Activated T-helper 2 cell treated with anti-CD3 and anti-CD28 coated beads, Interferon-gamma antibody, Interleukin-2, Interleukin-4, amounts not matched to agents 10 μg/mL and 5 μg/mL and 100 μg/mL, durations not matched to agents 14 hours and 24 hours and 36 hours (primary cell): ENCODE measurements at regions of chr11 and their contacts with region 1.

Region 1: GRCh38 chr11:44556735-44557409 is 8.6 kb upstream of the CD82 start:
- DNase-seq: peak; percentile 43
- H3K4me3 Mint-ChIP-seq: no peak overlapping the region
- H3K27ac Mint-ChIP-seq: peak overlapping the region; percentile 53
- H3K4me1 Mint-ChIP-seq: peaks cover 31% of the 10 kb centered on the region
- H3K27me3 Mint-ChIP-seq: peaks cover 2% of the 10 kb centered on the region

Region 2: DNA sequence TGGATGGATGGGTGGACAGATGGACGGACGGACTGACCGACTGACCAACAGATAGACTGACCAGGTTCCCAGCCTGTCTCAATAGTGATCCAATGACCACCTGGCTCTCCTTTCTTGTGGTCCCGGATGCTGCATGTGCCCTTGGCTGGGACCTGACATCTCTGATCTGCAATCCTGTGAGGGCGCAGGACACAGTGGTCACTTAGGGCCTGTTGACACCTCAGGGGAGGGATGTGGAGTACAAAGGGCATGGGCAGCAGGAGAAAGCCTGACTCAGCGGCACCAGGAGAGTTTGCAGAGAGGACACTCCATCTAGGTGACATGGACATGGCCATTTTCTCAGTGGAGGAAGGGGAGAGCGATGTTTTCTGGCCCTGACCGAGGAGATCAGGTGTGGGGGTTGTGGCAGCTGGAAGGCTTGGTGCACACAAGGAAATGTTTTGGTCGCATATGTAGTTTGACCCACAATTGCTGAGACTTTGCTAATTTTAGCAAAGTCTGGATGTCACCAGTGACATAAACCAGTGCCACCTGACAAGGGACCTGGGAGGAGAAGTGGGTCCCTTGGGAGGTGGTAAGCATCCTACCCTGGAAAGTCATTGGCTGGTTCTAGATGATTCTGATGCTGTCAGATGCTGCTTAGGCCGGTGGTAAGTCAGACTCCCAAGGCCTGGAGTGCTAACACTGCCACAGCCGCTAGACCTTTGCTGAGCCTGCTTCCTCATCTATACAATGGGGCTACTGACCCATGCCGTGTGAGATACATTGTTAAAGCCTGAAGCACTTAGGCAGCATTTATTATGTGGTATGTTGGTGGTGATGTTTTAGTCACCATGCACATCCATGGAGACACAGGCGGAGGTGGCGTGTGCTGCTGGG is 59.3 kb after region 1 on chr11:
- intact Hi-C with region 1: loop called (anchors 1 kb)
- DNase-seq: no peak
- H3K4me3 Mint-ChIP-seq: no peak overlapping the region
- H3K27ac Mint-ChIP-seq: peak overlapping the region; percentile 40
- H3K4me1 Mint-ChIP-seq: peaks cover 31% of the 10 kb centered on the region
- H3K27me3 Mint-ChIP-seq: no peaks in the 10 kb centered on the region

Region 3: DNA sequence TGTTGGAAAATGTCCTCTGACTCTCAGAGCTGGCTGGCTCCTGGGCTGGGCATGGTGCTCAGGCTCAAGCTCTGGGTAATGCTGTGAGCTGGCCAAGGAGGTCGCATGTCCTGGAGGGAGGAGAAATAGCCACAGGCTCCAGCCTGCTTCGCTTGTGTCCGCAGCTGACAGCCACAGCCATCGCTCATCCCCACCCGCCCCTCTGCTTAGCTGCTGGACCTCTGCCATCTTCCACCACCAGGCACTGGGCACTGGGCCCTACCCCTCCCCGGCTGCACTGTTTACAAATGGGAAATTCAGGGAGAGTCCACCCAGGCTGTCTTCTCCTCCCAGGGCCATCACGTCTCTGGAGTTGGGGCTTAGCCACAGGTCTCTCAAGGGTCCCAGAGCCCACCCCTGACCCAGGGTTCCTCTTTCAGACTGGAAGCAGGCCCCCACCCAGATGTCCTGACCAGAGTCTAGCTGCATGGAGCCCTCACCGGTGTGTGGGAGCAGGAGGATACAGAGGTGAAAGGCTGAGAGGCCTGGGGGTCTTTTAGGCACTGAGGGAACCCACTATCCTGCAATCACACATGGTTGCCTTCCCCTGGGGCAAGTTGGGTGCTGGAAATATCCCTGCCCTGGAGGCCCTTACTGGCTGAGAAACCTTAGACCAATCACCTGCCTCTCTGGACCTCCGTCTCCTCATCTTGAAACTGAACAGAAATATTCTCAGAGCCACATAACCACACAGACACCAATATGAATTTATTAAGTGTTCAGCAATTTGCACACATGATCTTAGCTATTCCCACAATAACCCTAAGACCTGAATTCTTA is 71.2 kb after region 1 on chr11:
- intact Hi-C with region 1: loop called (anchors 1 kb)
- DNase-seq: peak; percentile 6
- H3K4me3 Mint-ChIP-seq: no peak overlapping the region
- H3K27ac Mint-ChIP-seq: no peak overlapping the region
- H3K4me1 Mint-ChIP-seq: peaks cover 12% of the 10 kb centered on the region
- H3K27me3 Mint-ChIP-seq: no peaks in the 10 kb centered on the region

Region 4: DNA sequence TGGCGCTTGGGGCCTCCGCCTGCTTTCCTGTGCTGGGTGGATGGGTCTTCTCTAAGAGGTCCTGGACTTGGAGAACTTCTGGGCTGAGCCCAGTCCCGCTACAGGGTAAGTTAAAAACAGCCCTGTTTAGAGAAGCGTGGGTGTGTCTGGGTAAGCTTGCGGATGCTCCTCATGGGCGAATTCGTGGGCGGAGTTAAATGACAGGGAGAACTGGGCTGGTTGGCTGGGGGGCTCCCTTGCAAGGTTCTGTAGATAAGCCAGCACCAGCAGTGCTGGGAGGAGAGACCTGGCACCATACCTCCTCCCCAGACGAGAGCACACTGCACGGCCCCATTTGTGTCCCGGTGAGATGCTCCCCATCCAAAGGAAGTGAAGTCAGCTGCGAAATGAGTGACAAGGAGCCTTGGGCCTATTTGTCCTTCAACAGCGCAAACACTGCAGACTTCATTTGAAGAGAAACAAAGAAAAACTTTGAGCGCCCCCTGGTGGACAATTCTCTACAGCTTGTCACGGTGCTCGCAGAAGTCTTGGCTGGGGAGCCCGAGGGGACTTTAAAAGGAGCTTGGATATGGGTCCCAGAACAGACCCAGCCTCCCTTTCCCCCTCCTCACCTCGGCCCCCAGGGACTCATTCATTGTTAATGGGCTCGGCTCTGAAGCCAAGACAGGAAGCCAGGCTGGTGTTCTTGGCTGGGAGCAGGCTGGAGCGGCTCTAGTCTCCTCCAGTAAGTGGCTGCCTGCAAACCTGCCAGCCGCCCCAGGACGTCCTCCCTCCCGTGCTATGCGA is 354.4 kb after region 1 on chr11:
- intact Hi-C with region 1: loop called (anchors 5 kb)
- DNase-seq: peak; percentile 70
- H3K4me3 Mint-ChIP-seq: no peak overlapping the region
- H3K27ac Mint-ChIP-seq: no peak overlapping the region
- H3K4me1 Mint-ChIP-seq: peaks cover 3% of the 10 kb centered on the region
- H3K27me3 Mint-ChIP-seq: peaks cover 4% of the 10 kb centered on the region